SK-N-SH (cell line): ENCODE measurements at regions of chr6 and their contacts with region 1.

Region 1: DNA sequence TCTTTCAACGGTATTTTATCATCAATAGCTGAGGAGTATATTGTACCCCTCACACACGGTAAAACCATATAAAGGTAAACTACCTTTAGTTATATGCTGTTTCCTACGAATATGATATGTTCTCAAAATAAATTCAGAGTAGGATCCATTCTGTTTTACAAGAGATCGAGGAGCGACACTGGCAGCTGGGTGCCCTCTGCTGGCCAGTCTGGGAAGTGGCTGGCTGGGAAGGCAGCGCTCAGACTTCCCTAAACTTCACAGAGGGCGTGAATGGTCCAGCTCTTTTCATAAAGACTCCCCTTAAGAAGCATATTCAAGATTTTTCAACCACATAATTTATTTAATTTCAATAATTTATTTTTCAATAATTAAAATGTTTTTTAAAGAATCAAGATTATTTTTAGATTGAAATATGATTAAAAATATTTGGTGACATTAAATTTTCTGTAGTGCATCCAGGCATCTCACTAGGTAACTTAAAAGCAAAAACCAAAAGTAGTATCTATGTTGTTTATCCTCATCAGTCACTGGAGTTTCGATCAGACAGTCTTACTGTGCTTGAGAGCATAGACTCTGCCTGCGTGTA is 187.5 kb upstream of the PDE10A start:
- DNase-seq: peak; percentile 82
- H3K4me3 ChIP-seq: peak overlapping the region in 1 of 2 experiments; percentile 48; a peak in 1 of 4 replicates
- H3K27ac ChIP-seq: no peak overlapping the region
- H3K4me1 ChIP-seq: no peaks in the 10 kb centered on the region; a peak in 1 of 4 replicates
- H3K27me3 ChIP-seq: no peaks in the 10 kb centered on the region
- CTCF ChIP-seq: peak; percentile 81
- EP300 ChIP-seq: no peak
- RAD21 ChIP-seq: peak; percentile 87

Region 2: GRCh38 chr6:165448210-165448609 is 402.3 kb before region 1 on chr6:
- CTCF ChIA-PET with region 1: interaction called, 12 read pairs
- POLR2A ChIA-PET with region 1: no interaction called
- DNase-seq: no peak
- H3K4me3 ChIP-seq: no peak overlapping the region
- H3K27ac ChIP-seq: no peak overlapping the region
- H3K4me1 ChIP-seq: no peaks in the 10 kb centered on the region
- H3K27me3 ChIP-seq: no peaks in the 10 kb centered on the region
- CTCF ChIP-seq: no peak
- EP300 ChIP-seq: no peak
- RAD21 ChIP-seq: no peak

Region 3: DNA sequence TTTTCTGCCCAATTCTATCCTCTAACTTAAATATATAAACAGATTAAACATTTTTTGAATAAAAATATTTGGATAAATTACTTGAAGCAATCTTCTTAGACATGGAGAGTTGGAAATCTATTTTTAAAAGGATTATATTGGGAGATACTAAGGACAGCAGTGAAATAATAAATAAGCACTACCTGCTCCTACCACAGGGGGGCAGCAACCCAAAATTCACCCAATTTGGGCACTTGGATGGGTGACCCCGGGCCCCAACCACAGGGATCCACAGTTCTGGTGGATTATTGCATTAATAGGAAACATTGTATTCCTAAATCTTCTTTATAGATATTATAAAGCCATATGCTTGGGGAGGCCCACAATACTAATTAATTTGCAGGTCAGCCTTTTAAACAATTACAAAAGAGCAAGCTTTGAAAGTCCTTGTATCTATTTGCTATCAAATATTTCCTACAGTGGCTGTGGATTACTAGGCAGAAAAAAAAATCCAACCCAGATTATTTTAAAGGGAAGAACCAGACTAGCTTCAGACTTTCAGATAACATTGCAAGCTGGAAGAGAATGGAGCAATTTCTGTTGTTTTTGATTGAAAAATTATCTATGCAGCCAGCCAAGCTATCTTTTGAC is 121.1 kb before region 1 on chr6:
- CTCF ChIA-PET with region 1: interaction called, 27 read pairs
- POLR2A ChIA-PET with region 1: no interaction called
- DNase-seq: peak; percentile 74
- H3K4me3 ChIP-seq: no peak overlapping the region
- H3K27ac ChIP-seq: no peak overlapping the region
- H3K4me1 ChIP-seq: no peaks in the 10 kb centered on the region
- H3K27me3 ChIP-seq: no peaks in the 10 kb centered on the region
- CTCF ChIP-seq: peak; percentile 73
- EP300 ChIP-seq: no peak
- RAD21 ChIP-seq: peak; percentile 49

Region 4: GRCh38 chr6:165827190-165827518 is 23.4 kb before region 1 on chr6:
- CTCF ChIA-PET with region 1: interaction called, 10 read pairs
- POLR2A ChIA-PET with region 1: no interaction called
- DNase-seq: no peak
- H3K4me3 ChIP-seq: no peak overlapping the region
- H3K27ac ChIP-seq: no peak overlapping the region
- H3K4me1 ChIP-seq: no peaks in the 10 kb centered on the region
- H3K27me3 ChIP-seq: no peaks in the 10 kb centered on the region
- CTCF ChIP-seq: no peak
- EP300 ChIP-seq: no peak
- RAD21 ChIP-seq: no peak

Region 5: DNA sequence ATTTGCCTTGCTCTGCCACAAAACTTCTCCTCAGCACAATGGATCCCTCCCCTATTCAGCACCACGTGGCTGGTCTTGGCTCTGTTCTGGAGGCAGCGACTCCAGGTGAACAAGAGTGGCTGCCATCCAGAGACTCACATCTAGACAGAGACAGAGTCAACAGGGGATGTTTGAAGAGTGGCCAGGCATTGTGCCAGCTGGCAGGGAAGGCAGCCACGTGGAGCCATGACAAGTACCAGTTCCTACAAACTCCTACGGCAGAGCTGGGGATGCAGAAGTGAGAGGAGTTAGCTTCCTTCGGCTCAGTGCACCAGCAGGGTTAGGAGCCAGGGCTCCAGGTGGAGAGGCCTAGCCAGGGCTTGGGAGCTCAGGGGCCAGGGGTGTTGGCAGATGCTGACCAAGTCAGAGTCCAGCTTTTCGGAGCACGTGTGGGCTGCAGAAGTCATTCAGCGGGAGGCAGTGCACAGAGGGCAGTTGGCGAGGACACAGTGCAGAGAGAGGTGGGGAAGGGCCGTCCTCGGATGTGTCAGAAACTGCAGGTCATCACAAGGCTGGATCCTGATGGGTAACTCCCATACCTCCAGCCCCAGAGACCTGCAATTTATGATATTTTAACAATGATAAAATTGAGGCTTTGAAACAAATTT is 15.8 kb before region 1 on chr6:
- CTCF ChIA-PET with region 1: interaction called, 36 read pairs
- POLR2A ChIA-PET with region 1: no interaction called
- DNase-seq: no peak
- H3K4me3 ChIP-seq: no peak overlapping the region
- H3K27ac ChIP-seq: no peak overlapping the region
- H3K4me1 ChIP-seq: peaks cover 0 to 4% of the 10 kb centered on the region in 2 experiments; a peak in 1 of 4 replicates
- H3K27me3 ChIP-seq: no peaks in the 10 kb centered on the region
- CTCF ChIP-seq: no peak
- EP300 ChIP-seq: no peak
- RAD21 ChIP-seq: no peak

Region 6: DNA sequence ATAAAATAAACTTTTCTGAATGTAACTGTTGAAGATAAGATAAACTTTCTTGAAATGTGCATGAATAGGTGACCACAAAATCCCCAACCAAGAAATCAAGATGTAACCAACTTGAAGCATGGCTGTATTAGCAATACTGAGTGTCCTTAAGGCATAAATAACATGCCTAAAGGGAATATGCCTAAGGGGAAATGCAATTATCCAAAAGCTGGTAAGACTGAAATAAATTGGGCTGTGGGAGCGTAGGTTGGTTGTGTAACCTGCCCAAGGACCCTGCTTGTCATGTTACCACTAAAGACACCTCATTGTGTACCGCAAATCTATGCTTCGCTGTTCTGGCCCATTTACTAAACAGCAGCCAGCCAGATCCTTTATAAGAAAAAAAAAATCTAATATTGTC is 13.3 kb after region 1 on chr6:
- CTCF ChIA-PET with region 1: interaction called, 24 read pairs
- POLR2A ChIA-PET with region 1: no interaction called
- DNase-seq: no peak
- H3K4me3 ChIP-seq: no peak overlapping the region
- H3K27ac ChIP-seq: no peak overlapping the region
- H3K4me1 ChIP-seq: no peaks in the 10 kb centered on the region
- H3K27me3 ChIP-seq: no peaks in the 10 kb centered on the region
- CTCF ChIP-seq: no peak
- EP300 ChIP-seq: no peak
- RAD21 ChIP-seq: no peak